RWPE1 (cell line): ENCODE measurements at regions of chr11 and their contacts with region 1.

Region 1: GRCh38 chr11:69670158-69670845 is 4.9 kb downstream of the LTO1 start:
- DNase-seq: peak; percentile 84
- H3K27ac ChIP-seq: peak overlapping the region; percentile 54
- CTCF ChIP-seq: peak; percentile 94

Region 2: DNA sequence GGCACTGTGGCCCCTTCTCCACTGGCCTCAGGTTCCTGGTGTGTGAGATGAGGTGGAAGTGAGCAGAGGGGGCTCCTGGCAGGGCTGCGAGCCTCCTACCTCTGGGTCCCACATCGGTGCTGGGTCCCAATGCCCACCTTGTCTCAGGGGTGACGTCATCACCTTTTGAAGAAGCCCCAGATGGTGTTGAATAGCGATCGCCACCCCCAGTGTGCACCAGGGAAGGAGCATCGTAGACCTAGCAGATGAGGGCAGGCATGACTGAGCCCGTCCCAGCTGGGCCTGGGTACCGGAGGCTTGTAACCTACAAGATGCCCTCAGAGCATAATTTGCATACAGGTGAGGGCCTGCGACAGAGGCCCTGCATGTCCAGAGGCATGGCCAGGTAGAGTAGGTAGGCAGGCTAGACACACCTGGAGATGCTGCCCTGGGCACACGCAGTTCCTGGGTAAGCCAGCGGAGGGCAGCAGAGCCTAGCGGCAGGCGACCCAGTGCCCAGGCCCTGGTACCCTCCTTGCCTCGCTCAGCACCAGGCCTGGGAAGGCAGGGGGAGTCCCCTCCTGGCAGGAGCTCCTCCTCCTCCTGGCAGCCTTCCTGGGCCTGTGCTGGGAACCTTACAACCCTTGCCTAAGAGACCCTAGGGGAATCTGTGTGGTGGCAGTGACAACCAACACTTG is 569.0 kb before region 1 on chr11:
- CTCF ChIA-PET with region 1: interaction called, 16 read pairs
- POLR2A ChIA-PET with region 1: no interaction called
- DNase-seq: peak; percentile 87
- H3K27ac ChIP-seq: no peak overlapping the region
- CTCF ChIP-seq: peak; percentile 98

Region 3: DNA sequence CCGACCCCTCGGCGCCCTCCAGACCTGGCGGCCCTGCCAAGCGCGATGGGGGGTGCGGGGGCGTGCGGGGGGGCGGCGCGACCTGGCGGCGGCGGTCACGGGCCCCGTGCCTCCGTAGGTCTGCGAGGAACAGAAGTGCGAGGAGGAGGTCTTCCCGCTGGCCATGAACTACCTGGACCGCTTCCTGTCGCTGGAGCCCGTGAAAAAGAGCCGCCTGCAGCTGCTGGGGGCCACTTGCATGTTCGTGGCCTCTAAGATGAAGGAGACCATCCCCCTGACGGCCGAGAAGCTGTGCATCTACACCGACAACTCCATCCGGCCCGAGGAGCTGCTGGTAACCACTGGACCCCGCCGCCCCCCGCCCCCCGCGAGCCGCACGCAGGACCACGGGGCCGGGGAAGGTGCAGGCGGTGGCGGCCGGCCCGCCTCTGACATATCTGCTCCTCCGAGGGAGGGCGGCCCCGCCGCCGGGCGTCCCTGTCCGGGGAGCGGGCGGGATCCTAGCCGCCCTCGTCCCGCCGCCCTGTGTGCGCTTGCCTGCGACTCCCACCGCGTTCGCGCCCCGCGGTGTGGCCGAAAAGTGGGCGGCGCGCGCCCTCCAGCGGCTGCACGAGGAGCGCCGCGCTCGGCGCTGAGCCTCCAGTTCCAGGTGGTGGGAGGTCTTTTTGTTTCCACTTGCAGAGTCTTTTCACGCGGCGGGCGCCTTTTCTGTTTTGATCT is 27.2 kb before region 1 on chr11:
- CTCF ChIA-PET with region 1: interaction called, 12 read pairs
- POLR2A ChIA-PET with region 1: no interaction called
- DNase-seq: no peak
- H3K27ac ChIP-seq: peak overlapping the region; percentile 87
- CTCF ChIP-seq: peak; percentile 86

Region 4: GRCh38 chr11:69654569-69655327 is 15.6 kb before region 1 on chr11:
- CTCF ChIA-PET with region 1: interaction called, 12 read pairs
- POLR2A ChIA-PET with region 1: no interaction called
- DNase-seq: no peak
- H3K27ac ChIP-seq: peak overlapping the region; percentile 48
- CTCF ChIP-seq: no peak